HCT116 (cell line): ENCODE measurements at regions of chr4 and their contacts with region 1.

Region 1: GRCh38 chr4:163554870-163555465 is 60.5 kb downstream of the TMA16 start:
- DNase-seq: no peak
- ATAC-seq: no peak
- H3K4me3 ChIP-seq: no peak overlapping the region
- H3K27ac ChIP-seq: no peak overlapping the region
- H3K4me1 ChIP-seq: no peaks in the 10 kb centered on the region
- H3K27me3 ChIP-seq: no peaks in the 10 kb centered on the region
- CTCF ChIP-seq: peak; percentile 46 to 87 (median 76)
- POLR2A ChIP-seq: no peak
- RAD21 ChIP-seq: peak; percentile 71

Region 2: GRCh38 chr4:163484906-163485305 is 70.1 kb before region 1 on chr4:
- CTCF ChIA-PET with region 1: interaction called, 14 read pairs
- POLR2A ChIA-PET with region 1: no interaction called
- RAD21 ChIA-PET with region 1: no interaction called
- intact Hi-C with region 1: no loop called
- DNase-seq: peak; percentile 50
- ATAC-seq: peak; percentile 89
- H3K4me3 ChIP-seq: no peak overlapping the region
- H3K27ac ChIP-seq: no peak overlapping the region
- H3K4me1 ChIP-seq: no peaks in the 10 kb centered on the region
- H3K27me3 ChIP-seq: no peaks in the 10 kb centered on the region
- CTCF ChIP-seq: peak; percentile 50 to 78 (median 61); a peak in 5 of 6 replicates
- POLR2A ChIP-seq: no peak
- RAD21 ChIP-seq: peak; percentile 70

Region 3: DNA sequence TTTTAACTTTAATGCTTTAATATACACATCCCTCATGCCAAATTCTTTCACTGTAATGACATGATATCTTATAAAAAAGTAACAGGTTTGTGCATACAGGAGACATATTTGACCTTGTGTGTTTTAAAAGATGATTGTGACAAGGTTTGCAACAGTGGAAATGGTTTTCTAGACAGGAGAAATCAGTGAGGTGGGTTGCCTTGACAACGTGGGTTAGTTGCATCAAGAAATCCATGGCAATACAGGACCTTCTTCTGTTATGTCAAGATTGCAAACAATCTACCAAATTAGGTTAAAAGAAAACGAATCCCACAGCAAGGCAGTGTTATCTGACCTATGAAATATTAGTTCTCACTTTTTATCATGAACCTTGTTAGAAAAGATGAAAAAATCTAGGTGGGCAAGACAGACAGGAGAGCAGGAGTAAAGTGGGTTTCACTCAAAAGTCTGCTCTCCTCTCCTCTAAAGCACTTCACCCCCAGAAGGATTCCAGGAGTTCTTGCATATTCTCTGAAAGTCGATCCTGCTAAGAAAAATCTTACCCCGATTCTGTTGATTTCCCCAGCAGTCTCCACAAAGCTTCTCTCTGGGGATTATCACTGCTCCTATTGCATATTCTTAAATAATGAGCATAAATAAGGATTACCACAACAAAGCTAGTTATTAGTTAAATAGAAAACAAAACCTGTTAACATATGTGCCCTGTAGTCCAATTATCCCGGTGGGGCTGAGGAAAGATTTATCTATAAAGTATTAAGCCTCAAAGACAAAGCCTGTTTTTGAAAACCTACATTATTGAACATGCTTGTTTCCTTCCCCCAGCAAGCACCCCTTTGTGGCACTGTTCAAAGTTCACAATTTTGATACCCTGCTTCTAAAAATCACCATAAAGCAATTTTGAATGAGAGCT is 10.5 kb after region 1 on chr4:
- CTCF ChIA-PET with region 1: no interaction called
- POLR2A ChIA-PET with region 1: no interaction called
- RAD21 ChIA-PET with region 1: no interaction called
- intact Hi-C with region 1: no loop called
- DNase-seq: no peak
- ATAC-seq: no peak
- H3K4me3 ChIP-seq: no peak overlapping the region
- H3K27ac ChIP-seq: no peak overlapping the region
- H3K4me1 ChIP-seq: no peaks in the 10 kb centered on the region
- H3K27me3 ChIP-seq: no peaks in the 10 kb centered on the region
- CTCF ChIP-seq: no peak
- POLR2A ChIP-seq: no peak
- RAD21 ChIP-seq: no peak

Region 4: GRCh38 chr4:163755013-163755412 is 200.0 kb after region 1 on chr4:
- CTCF ChIA-PET with region 1: interaction called, 7 read pairs
- POLR2A ChIA-PET with region 1: no interaction called
- RAD21 ChIA-PET with region 1: interaction called in 1 of 2 experiments, 3 read pairs
- intact Hi-C with region 1: loop called (anchors 1 kb)
- DNase-seq: no peak
- ATAC-seq: peak; percentile 69
- H3K4me3 ChIP-seq: no peak overlapping the region
- H3K27ac ChIP-seq: no peak overlapping the region
- H3K4me1 ChIP-seq: no peaks in the 10 kb centered on the region
- H3K27me3 ChIP-seq: no peaks in the 10 kb centered on the region
- CTCF ChIP-seq: peak; percentile 37 to 64 (median 55); a peak in 5 of 6 replicates
- POLR2A ChIP-seq: no peak
- RAD21 ChIP-seq: peak; percentile 53

Region 5: DNA sequence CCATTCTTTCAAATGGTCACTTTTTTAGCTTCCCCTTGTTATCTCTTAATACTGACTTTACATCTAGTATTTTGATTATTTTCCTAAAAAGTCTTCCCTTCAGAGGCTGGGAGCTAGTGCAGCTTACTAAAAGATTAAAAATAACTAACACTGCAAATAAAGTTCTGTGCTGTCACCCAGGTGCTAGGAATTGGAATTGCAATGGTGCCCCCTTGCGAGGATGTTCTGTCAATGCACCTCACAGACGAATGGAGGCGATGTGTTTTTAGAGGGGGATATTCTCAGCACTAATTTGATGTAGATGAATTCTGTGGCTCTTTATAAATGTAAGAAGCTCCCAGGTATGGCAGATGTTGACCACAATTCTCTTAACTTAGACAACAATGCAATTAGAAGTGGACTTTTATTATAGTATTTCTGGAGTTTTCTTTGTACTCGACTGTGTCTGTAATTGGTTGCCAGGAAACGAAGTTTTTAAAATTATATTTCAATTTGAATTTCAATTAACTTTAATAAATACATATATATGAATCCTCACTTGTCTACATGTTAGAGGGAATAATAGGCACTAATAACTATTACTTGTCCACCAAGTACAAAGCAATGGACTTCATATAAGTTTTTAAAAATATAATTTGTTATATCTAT is 1177.0 kb after region 1 on chr4:
- CTCF ChIA-PET with region 1: interaction called, 10 read pairs
- POLR2A ChIA-PET with region 1: no interaction called
- RAD21 ChIA-PET with region 1: interaction called in 1 of 2 experiments, 3 read pairs
- intact Hi-C with region 1: loop called (anchors 5 kb)
- DNase-seq: peak; percentile 43
- ATAC-seq: peak; percentile 81
- H3K4me3 ChIP-seq: no peak overlapping the region
- H3K27ac ChIP-seq: no peak overlapping the region
- H3K4me1 ChIP-seq: no peaks in the 10 kb centered on the region
- H3K27me3 ChIP-seq: no peaks in the 10 kb centered on the region
- CTCF ChIP-seq: peak; percentile 71 to 91 (median 82)
- POLR2A ChIP-seq: no peak
- RAD21 ChIP-seq: peak; percentile 87

Region 6: DNA sequence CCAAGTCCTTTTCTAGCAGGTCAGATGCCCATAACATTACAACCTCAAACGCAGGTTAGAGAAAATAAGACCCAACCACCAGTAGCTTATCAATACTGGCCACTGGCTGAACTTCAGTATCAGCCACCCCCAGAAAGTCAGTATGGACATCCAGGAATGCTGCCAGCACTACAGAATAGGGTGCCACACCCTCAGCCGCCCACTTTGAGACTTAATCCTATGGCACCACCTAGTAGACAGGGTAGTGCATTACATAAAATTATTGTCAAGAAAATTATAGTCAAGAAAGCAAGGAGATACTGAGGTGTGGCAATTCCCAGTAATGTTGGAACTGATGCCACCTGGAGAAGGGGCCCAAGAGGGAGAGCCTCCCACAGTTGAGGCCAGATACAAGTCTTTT is 1442.4 kb after region 1 on chr4:
- CTCF ChIA-PET with region 1: no interaction called
- POLR2A ChIA-PET with region 1: no interaction called
- RAD21 ChIA-PET with region 1: no interaction called
- intact Hi-C with region 1: loop called (anchors 10 kb)
- DNase-seq: peak; percentile 40
- ATAC-seq: peak; percentile 91
- H3K4me3 ChIP-seq: no peak overlapping the region
- H3K27ac ChIP-seq: no peak overlapping the region
- H3K4me1 ChIP-seq: no peaks in the 10 kb centered on the region
- H3K27me3 ChIP-seq: no peaks in the 10 kb centered on the region
- CTCF ChIP-seq: peak; percentile 23 to 59 (median 59); a peak in 4 of 6 replicates
- POLR2A ChIP-seq: no peak
- RAD21 ChIP-seq: peak; percentile 81